B cell (primary cell): ENCODE measurements at regions of chr11 and their contacts with region 1.

Region 1: DNA sequence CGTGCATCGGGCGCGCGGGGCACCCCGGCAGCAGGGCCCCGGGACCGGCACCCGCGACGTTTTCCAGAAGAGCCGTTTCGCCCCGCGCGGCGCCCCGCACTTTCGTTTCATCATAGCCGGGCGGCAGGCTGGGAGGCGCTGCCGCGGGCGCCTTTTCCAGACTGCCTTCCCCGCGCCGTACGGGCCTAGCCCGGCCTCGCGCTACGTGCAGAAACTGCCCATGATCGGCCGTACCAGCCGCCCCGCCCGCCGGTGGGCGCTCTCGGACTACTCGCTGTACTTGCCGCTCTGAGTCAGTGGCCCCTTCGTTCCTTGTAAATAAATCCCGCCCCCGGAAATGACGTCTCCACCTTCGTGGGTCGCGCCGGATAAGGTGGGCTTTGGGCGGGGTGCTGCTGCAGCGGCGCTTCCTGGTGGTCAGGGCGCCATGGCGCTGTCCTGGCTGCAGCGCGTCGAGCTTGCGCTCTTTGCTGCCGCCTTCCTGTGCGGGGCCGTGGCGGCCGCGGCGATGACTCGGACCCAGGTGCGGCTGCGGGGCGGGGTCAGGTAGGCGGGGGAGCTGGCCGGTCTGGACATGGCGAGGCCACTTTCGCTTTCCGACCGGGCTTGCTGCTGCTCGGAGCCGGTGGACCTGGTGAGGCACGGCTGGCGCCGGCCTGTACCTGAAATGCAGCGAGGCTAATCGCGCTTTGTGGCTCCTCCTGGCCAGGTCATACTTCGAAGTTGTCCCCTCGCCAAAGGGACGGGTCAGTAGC is at the start of gene TMEM179B:
- DNase-seq: peak; percentile 98
- ATAC-seq: peak; percentile 70
- H3K4me3 ChIP-seq: peak within 1 kb of the TSS; percentile 87 to 97 (median 94)
- H3K4me3 Mint-ChIP-seq: peak within 1 kb of the TSS; percentile 97
- H3K27ac ChIP-seq: peak within 1 kb of the TSS; percentile 68 to 78
- H3K27ac Mint-ChIP-seq: peak within 1 kb of the TSS; percentile 96
- H3K4me1 ChIP-seq: peaks cover 27 to 35% of the 10 kb centered on the region in 2 donors
- H3K4me1 Mint-ChIP-seq: peaks cover 48% of the 10 kb centered on the region
- H3K27me3 ChIP-seq: no peaks in the 10 kb centered on the region
- H3K27me3 Mint-ChIP-seq: no peaks in the 10 kb centered on the region
- CTCF ChIP-seq: peak; percentile 65
- total RNA-seq, gene TMEM179B: 62.3 and 71.5 TPM in 2 replicates

Region 2: DNA sequence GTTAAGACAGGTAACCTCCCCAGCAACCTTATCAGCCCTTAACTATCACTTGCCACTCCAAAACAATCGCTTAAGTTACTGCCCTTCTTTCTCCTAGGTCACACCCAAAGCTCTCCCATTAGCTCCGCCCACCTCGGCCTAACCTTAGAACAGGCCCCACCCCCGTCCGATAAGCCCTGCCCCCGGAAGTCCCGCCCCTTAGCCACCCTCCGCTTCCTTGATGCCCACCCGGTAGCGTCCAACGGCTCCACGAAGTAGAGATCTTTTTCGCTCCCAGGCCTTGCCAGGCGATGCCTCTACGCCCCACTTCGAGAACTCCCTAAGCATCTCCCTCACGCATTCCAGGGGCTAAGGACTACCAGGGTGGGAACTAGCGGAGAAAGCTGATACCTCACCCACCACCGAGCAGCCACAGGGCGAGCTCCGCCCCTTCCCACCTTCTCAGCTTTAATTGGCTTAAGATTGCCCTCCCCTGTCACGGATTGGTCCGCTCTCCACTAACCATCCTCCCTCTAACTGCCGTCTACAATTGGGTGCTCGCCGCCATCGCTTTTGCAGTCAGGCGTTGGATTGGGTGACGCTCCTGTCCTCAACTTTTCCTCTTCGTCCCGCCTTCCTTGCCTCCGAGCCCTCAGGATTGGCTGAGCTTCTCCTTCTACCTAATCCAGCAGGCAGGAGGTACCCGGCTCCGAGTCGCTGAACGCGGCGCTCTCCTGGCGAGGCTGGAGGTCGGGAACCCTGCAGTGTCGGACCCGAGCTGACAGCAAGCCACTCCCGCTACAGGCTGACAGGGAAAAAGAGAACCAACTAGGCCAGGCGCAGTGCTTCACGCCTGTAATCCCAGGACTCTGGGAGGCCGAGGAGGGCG is 33.2 kb before region 1 on chr11 and contains the start of gene ZBTB3:
- CTCF ChIA-PET with region 1: interaction called, 32 read pairs
- POLR2A ChIA-PET with region 1: interaction called, 15 read pairs
- intact Hi-C with region 1: loop called (anchors 1 kb)
- DNase-seq: peak; percentile 99
- ATAC-seq: peak; percentile 92
- H3K4me3 ChIP-seq: peak within 1 kb of the TSS; percentile 82 to 94 (median 86)
- H3K4me3 Mint-ChIP-seq: peak within 1 kb of the TSS; percentile 99
- H3K27ac ChIP-seq: peak within 1 kb of the TSS; percentile 80 to 84
- H3K27ac Mint-ChIP-seq: peak within 1 kb of the TSS; percentile 99
- H3K4me1 ChIP-seq: peaks cover 7 to 21% of the 10 kb centered on the region in 2 donors
- H3K4me1 Mint-ChIP-seq: peaks cover 27% of the 10 kb centered on the region
- H3K27me3 ChIP-seq: no peaks in the 10 kb centered on the region
- H3K27me3 Mint-ChIP-seq: no peaks in the 10 kb centered on the region
- CTCF ChIP-seq: no peak
- total RNA-seq, gene ZBTB3: 22.0 and 24.8 TPM in 2 replicates

Region 3: DNA sequence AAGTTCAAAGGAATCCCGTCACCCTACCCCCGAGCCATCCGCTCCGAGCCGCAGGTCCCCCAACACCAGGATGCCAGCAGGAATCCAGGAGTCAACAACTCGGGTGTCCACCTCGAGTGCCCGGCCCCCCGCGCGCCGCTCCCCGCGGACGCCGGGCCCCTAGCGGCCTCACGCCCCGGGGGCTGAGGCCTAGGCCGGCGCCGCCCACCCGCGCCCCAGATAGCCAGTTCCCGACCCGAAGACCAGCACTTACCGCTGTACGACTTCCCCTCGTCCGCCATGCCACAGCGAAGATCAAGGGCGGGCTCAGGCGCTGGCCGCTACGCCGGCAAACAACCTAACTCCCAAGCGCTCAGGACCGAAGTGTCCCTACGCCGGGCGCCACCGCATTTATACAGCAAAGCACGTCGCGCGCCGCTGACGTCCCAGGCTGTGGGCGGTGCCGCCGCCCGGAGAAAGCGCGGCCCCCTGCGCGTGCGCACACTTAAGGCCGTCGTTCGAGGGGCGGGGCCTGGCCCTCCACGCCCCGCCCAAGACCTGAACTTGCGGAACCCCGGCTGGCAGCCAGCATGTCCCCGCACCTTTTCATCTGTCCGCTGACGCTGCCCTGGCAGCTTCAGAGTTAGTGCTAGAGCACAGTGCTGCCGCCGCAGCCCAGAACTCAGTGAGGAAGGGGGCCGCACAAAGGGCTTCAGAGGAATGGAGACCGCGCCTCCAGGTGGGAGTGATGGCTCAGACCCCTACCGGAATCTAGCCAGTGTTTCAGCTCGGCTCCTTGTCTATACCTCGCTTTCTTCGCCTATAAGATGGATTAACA is 18.1 kb after region 1 on chr11 and contains the start of gene NXF1:
- CTCF ChIA-PET with region 1: interaction called, 10 read pairs
- POLR2A ChIA-PET with region 1: interaction called, 6 read pairs
- intact Hi-C with region 1: loop called (anchors 1 kb)
- DNase-seq: peak; percentile 98
- ATAC-seq: peak; percentile 87
- H3K4me3 ChIP-seq: peak within 1 kb of the TSS; percentile 77 to 96 (median 89)
- H3K4me3 Mint-ChIP-seq: peak within 1 kb of the TSS; percentile 100
- H3K27ac ChIP-seq: peak within 1 kb of the TSS; percentile 69 to 86
- H3K27ac Mint-ChIP-seq: peak within 1 kb of the TSS; percentile 99
- H3K4me1 ChIP-seq: peaks cover 11 to 25% of the 10 kb centered on the region in 2 donors
- H3K4me1 Mint-ChIP-seq: peaks cover 32% of the 10 kb centered on the region
- H3K27me3 ChIP-seq: no peaks in the 10 kb centered on the region
- H3K27me3 Mint-ChIP-seq: no peaks in the 10 kb centered on the region
- CTCF ChIP-seq: peak; percentile 22
- total RNA-seq, gene NXF1: 161 TPM in 2 replicates

Region 4: DNA sequence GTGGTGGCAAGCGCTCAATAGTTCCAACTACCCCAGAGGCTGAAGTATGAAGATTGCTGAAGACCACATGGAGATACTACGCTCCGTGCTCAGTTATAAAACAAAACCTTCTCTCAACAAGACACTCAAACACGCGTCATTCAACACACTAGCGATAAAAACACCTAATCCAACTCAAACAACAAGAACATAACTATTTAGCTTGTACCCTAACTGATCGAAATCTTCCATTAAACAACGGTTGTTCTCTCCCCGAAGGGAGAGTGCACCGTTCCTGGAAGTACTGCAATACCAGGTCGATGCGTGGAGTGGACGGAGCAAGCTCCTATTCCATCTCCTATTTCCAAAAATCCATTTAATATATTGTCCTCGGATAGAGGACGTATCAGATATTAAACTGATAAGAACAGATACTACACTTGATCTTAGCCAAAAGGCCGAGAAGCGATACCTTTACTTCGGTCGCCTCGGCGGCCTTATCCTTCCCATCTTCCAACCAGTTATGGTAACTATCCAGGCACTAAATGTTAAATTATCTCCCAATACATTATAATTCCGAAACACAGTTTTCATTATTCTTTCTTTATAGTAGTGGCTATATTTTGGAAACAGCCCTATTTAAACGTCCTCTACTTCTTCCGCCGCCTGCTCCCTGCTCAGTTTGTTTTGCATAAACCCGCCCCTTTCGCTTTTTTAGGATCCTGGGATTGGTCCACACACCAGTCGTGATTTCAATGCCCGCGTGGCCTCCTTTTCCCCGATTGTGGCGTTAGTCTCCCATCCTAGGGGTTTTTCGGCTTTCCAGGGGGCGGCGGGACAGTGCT is 54.4 kb after region 1 on chr11:
- CTCF ChIA-PET with region 1: interaction called, 13 read pairs
- POLR2A ChIA-PET with region 1: interaction called, 60 read pairs
- intact Hi-C with region 1: loop called (anchors 1 kb)
- DNase-seq: peak; percentile 95
- ATAC-seq: peak; percentile 58
- H3K4me3 ChIP-seq: peak overlapping the region; percentile 61 to 97 (median 91)
- H3K4me3 Mint-ChIP-seq: no peak overlapping the region
- H3K27ac ChIP-seq: peak overlapping the region; percentile 99 to 100
- H3K27ac Mint-ChIP-seq: no peak overlapping the region
- H3K4me1 ChIP-seq: peaks cover 14 to 33% of the 10 kb centered on the region in 2 donors
- H3K4me1 Mint-ChIP-seq: peaks cover 18% of the 10 kb centered on the region
- H3K27me3 ChIP-seq: no peaks in the 10 kb centered on the region
- H3K27me3 Mint-ChIP-seq: no peaks in the 10 kb centered on the region
- CTCF ChIP-seq: no peak

Region 5: DNA sequence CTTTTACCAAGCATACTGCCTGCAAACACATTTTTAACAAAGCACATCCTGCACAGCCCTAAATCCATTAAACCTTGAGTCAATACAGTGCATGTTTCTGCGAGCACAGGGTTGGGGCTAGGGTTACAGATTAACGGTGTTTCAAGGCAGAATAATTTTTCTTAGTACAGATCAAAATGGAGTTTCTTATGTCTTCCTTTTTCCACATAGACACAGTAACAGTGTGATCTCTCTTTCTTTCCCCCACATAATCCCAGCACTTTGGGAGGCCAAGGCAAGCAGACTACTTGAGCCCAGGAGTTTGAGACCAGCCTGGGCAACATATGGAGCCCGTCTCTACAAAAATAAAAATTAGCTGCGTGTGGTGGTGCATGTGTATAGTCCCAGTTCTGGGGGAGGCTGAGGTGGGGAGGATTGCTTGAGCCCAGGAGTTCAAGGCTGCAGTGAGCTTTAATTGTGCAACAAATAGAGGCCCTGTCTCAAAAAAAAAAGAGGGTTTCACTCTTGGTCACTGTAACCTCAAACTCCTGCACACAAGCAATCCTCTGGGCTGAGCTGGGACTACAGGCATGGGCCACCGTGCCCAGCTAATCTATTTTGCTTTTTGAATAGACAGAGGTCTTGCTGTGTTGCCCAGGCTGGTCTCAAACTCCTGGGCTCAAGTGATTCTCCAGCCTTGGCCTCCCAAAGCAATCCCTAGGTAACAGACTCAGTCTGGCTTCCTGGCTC is 73.8 kb after region 1 on chr11:
- CTCF ChIA-PET with region 1: interaction called, 101 read pairs
- POLR2A ChIA-PET with region 1: interaction called, 22 read pairs
- intact Hi-C with region 1: loop called (anchors 1 kb)
- DNase-seq: no peak
- ATAC-seq: no peak
- H3K4me3 ChIP-seq: no peak overlapping the region
- H3K4me3 Mint-ChIP-seq: no peak overlapping the region
- H3K27ac ChIP-seq: no peak overlapping the region
- H3K27ac Mint-ChIP-seq: no peak overlapping the region
- H3K4me1 ChIP-seq: peaks cover 4 to 24% of the 10 kb centered on the region in 2 donors
- H3K4me1 Mint-ChIP-seq: peaks cover 19% of the 10 kb centered on the region
- H3K27me3 ChIP-seq: no peaks in the 10 kb centered on the region
- H3K27me3 Mint-ChIP-seq: no peaks in the 10 kb centered on the region
- CTCF ChIP-seq: no peak